Activated CD4-positive, alpha-beta T cell treated with anti-CD3 and anti-CD28 coated beads for 36 hours (primary cell): ENCODE measurements at regions of chr3 and their contacts with region 1.

Region 1: GRCh38 chr3:116757315-116757714 is 47.7 kb downstream of the TUSC7 start:
- DNase-seq: no peak
- ATAC-seq: no peak
- H3K4me3 Mint-ChIP-seq: no peak overlapping the region
- H3K27ac Mint-ChIP-seq: no peak overlapping the region
- H3K4me1 Mint-ChIP-seq: no peaks in the 10 kb centered on the region
- H3K27me3 Mint-ChIP-seq: peaks cover 2% of the 10 kb centered on the region

Region 2: GRCh38 chr3:115819785-115820384 is 937.4 kb before region 1 on chr3:
- CTCF ChIA-PET with region 1: no interaction called
- POLR2A ChIA-PET with region 1: no interaction called
- intact Hi-C with region 1: loop called (anchors 5 kb)
- DNase-seq: peak; percentile 68
- ATAC-seq: peak; percentile 90
- H3K4me3 Mint-ChIP-seq: no peak overlapping the region
- H3K27ac Mint-ChIP-seq: no peak overlapping the region
- H3K4me1 Mint-ChIP-seq: no peaks in the 10 kb centered on the region
- H3K27me3 Mint-ChIP-seq: no peaks in the 10 kb centered on the region

Region 3: GRCh38 chr3:116140100-116140689 is 617.1 kb before region 1 on chr3:
- CTCF ChIA-PET with region 1: interaction called, 3 read pairs
- POLR2A ChIA-PET with region 1: no interaction called
- intact Hi-C with region 1: loop called (anchors 1 to 2 kb)
- DNase-seq: no peak
- ATAC-seq: no peak
- H3K4me3 Mint-ChIP-seq: no peak overlapping the region
- H3K27ac Mint-ChIP-seq: no peak overlapping the region
- H3K4me1 Mint-ChIP-seq: no peaks in the 10 kb centered on the region
- H3K27me3 Mint-ChIP-seq: no peaks in the 10 kb centered on the region

Region 4: DNA sequence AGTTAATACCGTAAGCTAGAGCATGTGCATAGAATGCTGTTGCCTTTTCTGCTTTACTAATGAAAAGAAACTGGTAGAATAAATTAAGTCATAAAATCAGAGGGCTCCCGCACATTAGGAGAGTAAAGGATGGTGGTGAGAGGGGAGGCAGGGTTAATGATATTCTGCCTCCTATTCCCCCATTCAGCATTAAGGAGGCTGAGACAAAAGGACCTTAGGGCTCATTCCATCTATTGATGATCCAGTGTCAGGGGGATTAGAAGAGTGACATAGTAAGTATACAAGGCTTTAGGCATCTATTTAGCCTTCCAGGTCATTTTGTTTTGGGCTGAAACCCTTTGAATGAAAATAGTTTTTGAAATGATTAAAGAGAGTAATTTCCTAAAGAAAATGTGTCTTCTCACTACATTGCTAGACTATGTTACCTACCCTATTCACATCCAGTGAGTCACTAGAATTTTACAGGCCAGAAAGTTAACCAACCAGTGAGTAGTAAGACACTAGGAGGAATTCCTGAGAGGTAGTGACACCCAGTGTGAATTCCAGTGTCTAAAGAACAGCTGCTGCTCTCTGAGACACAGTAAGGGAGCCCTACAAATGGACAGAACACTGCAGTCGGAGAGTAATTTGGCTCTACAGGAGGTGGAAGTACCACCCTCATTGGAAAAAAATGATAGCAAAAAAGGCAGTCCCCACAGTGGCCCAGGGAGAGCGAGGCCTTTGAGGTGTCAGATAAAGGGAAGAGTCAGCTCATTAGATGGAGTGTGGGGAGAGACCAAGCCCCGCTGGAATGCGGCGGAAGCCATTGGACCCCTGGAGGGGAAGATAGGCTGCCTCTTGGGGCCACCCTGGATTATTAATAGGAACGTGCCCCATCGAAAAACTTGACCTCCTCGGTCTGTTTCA is 19.8 kb after region 1 on chr3:
- CTCF ChIA-PET with region 1: no interaction called
- POLR2A ChIA-PET with region 1: no interaction called
- intact Hi-C with region 1: no loop called
- DNase-seq: no peak
- ATAC-seq: no peak
- H3K4me3 Mint-ChIP-seq: no peak overlapping the region
- H3K27ac Mint-ChIP-seq: no peak overlapping the region
- H3K4me1 Mint-ChIP-seq: no peaks in the 10 kb centered on the region
- H3K27me3 Mint-ChIP-seq: peaks cover 2% of the 10 kb centered on the region